Lower leg skin (tissue), 4 donors: ENCODE measurements at regions of chr1 and their contacts with region 1.

Region 1: DNA sequence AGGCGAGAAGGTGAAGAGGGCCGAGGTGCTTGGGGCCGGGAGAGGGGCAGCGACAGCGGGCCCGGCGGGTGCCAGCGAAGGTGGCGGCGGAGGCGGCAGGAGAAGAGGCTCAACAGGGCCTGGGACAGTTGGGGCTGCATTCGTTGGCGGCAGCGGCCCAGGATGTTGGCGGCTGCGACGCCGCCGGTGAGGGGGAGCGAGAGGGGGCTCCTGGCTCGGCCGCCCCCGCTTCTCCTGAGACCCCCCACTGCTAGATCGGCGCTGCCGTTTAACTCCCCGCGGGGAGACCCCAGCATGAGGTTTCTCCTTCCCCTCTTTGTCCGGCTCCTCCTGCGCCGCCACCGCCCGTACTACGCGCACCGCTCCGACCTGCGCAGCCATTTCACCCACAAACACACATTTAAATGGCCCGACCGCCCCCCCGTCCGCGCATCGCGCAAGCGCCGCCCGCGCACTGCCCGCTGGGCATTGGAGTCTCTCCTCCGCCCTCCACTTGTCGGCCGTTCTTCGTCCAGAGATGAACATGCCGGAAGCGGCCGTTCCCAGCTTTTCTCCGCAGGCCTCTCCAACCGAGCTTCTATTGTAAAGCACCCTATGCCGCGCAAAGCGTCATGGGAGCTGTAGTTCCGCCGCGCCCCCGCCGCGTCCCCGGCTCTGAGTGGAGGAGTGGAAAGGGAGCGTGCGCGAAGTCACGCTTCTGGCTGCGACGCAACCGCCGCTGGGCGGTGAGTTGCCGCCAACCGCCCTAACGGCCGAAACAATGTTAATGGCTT is at the start of gene RSBN1:
- DNase-seq: peak; percentile 99 to 100
- H3K4me3 ChIP-seq: peak within 1 kb of the TSS; percentile 89
- CTCF ChIP-seq: no peak
- POLR2A ChIP-seq: peak in 1 of 2 donors; percentile 84
- total RNA-seq, gene RSBN1: 18.2 to 37.6 (median 24.5) TPM

Region 2: DNA sequence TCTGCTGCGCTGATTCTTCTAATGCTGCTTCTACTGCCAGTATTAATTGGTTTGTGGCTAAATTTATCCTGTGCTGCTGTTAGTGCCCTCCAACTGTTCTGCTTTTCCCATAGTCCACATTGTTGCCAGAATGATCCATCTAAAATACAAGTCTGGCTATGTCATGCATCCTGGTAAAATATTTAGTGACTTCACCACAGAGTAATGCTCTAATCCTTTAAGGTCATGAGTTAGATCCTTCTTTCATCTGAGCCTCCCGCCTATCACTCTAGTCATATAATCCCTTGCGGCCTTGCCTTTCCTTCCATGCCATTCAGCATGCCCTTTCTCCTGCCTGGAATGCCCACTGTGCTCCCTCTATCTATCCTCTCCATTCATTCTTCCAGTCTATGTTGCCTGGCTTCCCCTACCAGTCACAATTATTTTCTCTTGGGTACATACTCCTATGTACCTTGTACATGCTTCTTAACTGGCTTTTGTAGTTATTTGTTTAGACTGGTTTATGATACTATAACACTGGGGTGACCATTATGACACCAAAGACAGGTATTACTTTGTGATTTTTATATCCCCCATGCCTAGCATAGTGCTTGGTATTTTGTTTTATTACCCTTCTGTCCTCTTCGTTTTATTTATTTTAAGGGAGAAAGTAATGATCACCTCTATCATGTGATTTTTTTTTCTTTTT is 277.8 kb before region 1 on chr1:
- intact Hi-C with region 1: no loop called
- DNase-seq: no peak
- H3K4me3 ChIP-seq: no peak overlapping the region
- CTCF ChIP-seq: no peak
- POLR2A ChIP-seq: no peak

Region 3: DNA sequence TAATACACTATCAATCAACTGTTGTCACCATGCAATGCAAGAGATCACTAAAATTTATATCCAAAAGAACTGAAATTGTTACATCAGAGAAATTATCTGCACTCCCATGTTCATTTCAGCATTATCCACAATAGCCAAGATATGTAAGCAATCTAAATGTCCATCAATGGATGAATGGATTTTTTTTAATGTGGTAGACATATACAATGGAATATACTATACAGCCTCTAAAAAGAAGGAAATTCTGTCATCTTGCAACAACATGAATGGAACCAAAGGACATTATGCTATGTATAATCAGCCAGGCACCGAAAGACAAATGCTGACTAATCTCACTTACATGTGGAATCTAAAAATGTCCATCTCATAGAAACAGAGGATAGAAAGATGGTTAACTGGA is 608.7 kb after region 1 on chr1:
- intact Hi-C with region 1: loop called (anchors 5 kb)
- DNase-seq: no peak
- H3K4me3 ChIP-seq: no peak overlapping the region
- CTCF ChIP-seq: no peak
- POLR2A ChIP-seq: no peak